Psoas muscle (tissue), 8 donors: ENCODE measurements at regions of chr19 and their contacts with region 1.

Region 1: DNA sequence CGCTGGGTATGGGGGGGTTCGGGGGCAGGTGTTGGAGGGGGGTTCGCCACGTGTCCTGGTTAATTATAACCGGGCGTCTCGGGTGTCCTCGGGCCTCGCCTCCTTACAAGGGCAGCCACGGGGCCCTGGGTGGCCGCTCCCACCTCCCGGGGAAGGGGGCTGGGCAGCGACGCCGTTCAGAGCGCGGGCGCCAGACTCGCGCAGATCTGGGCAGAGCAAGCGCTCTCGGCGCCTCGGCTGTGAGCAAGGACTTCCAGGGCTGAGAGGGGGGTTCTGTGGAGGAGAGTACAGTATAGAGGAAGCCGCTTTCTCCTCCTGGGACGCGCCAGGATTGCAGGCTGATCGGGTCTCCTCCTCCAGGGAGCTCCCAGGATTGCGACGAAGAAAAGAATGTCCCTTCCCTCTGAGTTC is 1.0 kb upstream of the CKM start:
- DNase-seq: peak; percentile 77 to 91
- ATAC-seq: peak; percentile 66 to 75 (median 72)
- H3K4me3 ChIP-seq: peak overlapping the region; percentile 66
- H3K27ac ChIP-seq: peak overlapping the region; percentile 97
- H3K4me1 ChIP-seq: peaks cover 20% of the 10 kb centered on the region
- H3K27me3 ChIP-seq: no peaks in the 10 kb centered on the region
- CTCF ChIP-seq: no peak

Region 2: DNA sequence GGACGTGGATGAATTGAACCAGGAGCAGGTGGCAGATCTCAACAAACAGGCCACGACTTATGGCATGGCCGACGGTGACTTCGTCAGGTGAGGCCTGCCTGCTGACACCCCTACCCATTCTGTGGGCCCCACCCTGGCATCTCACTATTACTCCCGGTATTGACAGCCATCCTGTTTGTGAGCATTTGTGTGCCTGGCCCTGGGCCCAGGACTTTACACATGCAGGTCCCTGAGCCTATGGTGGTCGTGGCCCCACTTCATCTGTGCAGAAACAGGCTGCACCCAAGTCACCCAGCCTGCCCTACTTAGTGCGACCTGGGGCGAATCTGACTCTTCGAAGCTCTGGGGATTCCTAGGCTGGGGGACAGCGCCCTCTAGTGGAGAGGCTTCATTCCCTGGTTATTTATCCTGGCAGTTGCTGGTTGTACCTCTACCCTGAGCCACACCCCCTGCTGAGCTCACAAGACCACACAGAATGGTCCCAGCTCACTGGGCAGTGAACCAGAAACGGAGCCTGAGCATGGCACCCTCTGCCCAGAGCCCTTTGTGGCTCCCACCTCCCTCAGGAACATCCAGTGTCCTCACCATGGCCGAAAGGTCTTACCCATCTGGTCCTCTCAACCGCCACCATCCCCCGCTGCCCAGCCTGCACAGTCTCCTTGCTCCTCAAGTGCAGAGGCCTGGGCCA is 264.3 kb before region 1 on chr19:
- intact Hi-C with region 1: no loop called
- DNase-seq: peak; percentile 70 to 80
- ATAC-seq: peak; percentile 62 to 83 (median 72)
- H3K4me3 ChIP-seq: no peak overlapping the region
- H3K27ac ChIP-seq: no peak overlapping the region
- H3K4me1 ChIP-seq: no peaks in the 10 kb centered on the region
- H3K27me3 ChIP-seq: no peaks in the 10 kb centered on the region
- CTCF ChIP-seq: peak; percentile 87

Region 3: GRCh38 chr19:45283443-45284033 is 40.1 kb before region 1 on chr19:
- intact Hi-C with region 1: no loop called
- DNase-seq: no peak
- ATAC-seq: no peak
- H3K4me3 ChIP-seq: no peak overlapping the region
- H3K27ac ChIP-seq: no peak overlapping the region
- H3K4me1 ChIP-seq: no peaks in the 10 kb centered on the region
- H3K27me3 ChIP-seq: no peaks in the 10 kb centered on the region
- CTCF ChIP-seq: no peak

Region 4: DNA sequence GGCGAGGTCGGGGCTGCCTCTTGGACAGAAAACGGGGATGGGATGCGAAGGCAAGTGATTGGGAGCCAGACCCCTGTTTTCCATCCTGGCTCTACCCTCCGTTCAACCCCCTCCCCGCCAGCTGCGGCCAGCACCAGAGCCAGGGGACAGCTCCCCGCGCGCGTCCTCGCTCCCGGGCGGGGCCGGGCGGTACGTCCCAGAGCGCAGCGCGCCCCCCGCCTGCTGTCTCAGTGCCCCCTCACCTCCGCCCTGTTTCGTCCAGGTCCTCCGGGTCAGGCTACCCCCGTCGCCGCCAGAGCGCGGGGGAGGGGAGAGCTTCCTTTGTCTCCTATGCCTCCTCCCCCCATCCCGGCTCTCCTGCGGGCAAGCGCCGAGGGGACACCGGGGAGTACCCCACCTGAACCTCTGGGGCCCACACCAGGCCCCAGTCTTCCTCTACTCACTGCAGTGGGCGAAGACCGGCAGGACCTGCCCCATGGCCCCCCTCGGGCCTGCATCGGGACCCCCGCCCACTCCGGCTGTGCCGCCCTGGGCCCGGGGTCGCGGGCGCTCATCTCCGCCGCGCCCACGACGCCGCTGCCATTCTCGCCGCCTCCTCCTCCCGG is 172.8 kb after region 1 on chr19:
- intact Hi-C with region 1: loop called (anchors 5 to 10 kb)
- DNase-seq: peak; percentile 49 to 74
- ATAC-seq: peak in 1 of 4 donors; percentile 9
- H3K4me3 ChIP-seq: peak overlapping the region; percentile 79
- H3K27ac ChIP-seq: no peak overlapping the region
- H3K4me1 ChIP-seq: peaks cover 21% of the 10 kb centered on the region
- H3K27me3 ChIP-seq: peaks cover 0 to 40% (median 2%) of the 10 kb centered on the region in 3 donors
- CTCF ChIP-seq: no peak

Region 5: DNA sequence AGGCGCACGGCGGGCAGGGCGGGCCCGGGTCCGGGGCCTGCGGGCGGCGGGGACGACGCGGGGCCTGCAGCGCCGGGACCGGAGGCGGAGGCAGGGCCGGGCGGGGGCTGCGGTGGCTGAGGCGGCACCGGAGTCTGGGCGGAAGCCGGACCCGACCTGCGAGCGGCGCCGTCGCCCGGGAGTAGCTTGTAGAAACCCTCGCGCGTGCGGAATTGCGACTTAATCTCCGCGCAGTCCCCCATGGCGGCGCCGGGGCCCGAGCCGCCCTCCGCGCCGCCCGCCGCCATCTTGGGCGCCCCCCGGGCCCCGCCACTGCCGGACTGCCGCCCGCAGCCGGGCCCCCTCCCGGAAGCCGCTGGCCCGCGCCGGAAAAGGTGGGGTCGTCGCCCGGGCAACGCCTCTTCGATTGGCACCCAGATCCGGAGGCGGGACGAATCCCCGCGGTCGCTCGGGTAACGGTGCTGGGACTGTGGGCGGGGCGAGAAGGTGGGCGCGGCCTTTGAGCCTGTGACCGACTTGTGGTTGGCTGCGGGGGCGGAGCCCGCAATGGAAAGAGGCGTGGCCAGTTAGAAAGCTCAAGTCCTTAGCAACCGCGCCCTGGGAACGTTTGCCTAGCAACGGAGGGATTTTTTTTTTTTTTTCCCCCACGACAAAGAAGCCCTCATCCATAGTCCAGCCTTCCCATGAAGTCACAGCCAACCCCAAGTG is 468.9 kb after region 1 on chr19 and contains the start of gene DMWD:
- intact Hi-C with region 1: no loop called
- DNase-seq: peak; percentile 100
- ATAC-seq: peak; percentile 89 to 96 (median 93)
- H3K4me3 ChIP-seq: peak within 1 kb of the TSS; percentile 77
- H3K27ac ChIP-seq: peak within 1 kb of the TSS; percentile 88
- H3K4me1 ChIP-seq: peaks cover 32% of the 10 kb centered on the region
- H3K27me3 ChIP-seq: no peaks in the 10 kb centered on the region
- CTCF ChIP-seq: no peak
- total RNA-seq, gene DMWD: 50.8 to 104 (median 66.9) TPM